ENCODE measurements at regions of chr20 and their contacts with region 1.

Region 1: DNA sequence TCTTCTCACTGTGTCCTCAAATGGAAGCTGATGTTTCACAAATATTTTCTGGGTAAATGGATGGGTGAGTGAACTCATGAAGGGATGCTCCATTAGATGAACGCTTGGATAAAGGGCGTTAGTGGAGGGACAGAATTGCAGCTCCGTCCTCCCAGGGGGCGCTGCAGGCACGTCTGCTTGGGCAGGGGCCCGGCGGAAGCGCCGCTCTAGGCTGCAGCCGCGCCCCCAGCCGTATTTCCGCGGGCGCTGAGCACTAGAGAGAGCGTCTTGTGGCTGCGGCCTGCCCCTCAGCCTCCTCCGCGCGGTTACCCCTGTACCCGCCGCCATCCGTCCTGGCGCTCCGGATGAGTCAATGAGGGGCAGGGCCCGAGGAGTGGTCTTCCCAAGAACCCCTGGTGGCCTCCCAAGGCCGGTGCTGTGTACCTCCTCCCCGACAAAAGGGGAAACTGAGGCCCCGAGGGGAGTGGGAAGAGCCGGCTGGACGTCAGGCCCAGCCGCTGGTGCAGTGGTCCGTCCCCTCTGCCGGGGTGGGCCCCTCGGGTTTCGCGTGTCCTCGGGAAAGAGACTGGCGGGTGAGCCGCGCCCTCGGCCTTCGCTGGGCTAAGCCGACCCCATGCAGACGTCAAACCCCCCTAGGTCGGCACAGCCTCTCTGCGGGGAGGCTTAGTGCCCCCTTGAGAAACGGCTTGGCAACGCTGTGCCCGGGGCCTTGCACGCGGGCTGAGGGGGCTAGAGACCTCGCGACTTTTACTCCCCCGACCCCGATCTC is 11.5 kb upstream of the SNHG17 start:
- DNase-seq: peak; percentile 85
- H3K4me3 Mint-ChIP-seq: peak overlapping the region; percentile 77
- H3K27ac Mint-ChIP-seq: peak overlapping the region; percentile 87
- H3K4me1 Mint-ChIP-seq: peaks cover 7% of the 10 kb centered on the region
- H3K27me3 Mint-ChIP-seq: peaks cover 12% of the 10 kb centered on the region
- CTCF ChIP-seq: peak; percentile 95

Region 2: GRCh38 chr20:38426006-38426405 is 20.6 kb before region 1 on chr20:
- CTCF ChIA-PET with region 1: interaction called, 152 read pairs
- POLR2A ChIA-PET with region 1: interaction called, 271 read pairs
- intact Hi-C with region 1: no loop called
- DNase-seq: peak; percentile 89
- H3K4me3 Mint-ChIP-seq: no peak overlapping the region
- H3K27ac Mint-ChIP-seq: no peak overlapping the region
- H3K4me1 Mint-ChIP-seq: peaks cover 26% of the 10 kb centered on the region
- H3K27me3 Mint-ChIP-seq: no peaks in the 10 kb centered on the region
- CTCF ChIP-seq: no peak

Region 3: DNA sequence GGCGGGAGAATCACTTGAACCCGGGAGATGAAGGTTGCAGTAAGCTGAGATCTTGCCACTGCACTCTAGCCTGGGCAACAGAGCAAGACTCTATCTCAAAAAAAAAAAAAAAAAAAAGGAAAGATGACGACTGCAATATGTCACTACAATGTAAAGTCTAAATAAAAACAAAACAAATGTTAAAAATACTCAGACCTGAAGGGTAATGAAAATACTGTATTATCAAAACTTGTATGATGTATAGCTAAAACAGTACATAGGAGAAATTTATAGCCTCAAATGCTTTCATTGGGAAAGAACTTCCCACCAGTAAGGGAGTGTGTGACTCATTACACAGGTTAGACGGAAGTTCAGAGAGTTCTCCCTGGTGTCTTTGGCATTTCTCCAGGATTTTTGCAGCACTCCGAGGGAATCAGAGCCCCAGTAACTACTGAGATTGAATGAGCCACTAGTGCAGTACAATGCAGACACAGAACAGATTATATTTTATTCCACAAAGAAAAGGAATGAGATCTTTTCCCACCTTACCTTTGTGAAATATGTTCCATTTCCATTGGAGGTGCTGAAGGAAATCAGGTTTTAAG is 13.5 kb after region 1 on chr20:
- CTCF ChIA-PET with region 1: interaction called, 16 read pairs
- POLR2A ChIA-PET with region 1: interaction called, 22 read pairs
- intact Hi-C with region 1: no loop called
- DNase-seq: peak; percentile 95
- H3K4me3 Mint-ChIP-seq: peak overlapping the region; percentile 52
- H3K27ac Mint-ChIP-seq: peak overlapping the region; percentile 66
- H3K4me1 Mint-ChIP-seq: peaks cover 6% of the 10 kb centered on the region
- H3K27me3 Mint-ChIP-seq: no peaks in the 10 kb centered on the region
- CTCF ChIP-seq: no peak

Measured in MCF 10A (cell line).